ENCODE measurements at regions of chr9 and their contacts with region 1.

Region 1: GRCh38 chr9:98087420-98088354 is 31.2 kb downstream of the NANS start:
- DNase-seq: peak; percentile 45
- ATAC-seq: peak; percentile 76 to 82

Region 2: DNA sequence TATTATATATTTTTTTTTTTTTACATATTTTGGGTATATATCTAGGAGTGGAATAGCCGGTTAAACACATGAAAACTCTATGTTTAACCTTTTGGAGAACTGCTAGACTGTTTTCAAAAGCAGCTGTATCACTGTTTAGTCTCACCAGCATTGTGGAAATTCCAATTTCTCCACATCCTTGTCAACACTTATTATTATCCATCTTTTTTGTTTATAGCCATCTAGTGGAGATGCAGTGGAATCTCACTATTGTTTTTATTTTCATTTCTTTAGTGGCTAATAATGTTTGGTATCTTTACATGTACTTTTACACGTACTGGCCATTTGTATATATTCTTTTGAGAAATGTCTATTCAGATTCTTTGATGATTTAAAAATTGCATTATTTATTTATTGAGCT is 802.9 kb before region 1 on chr9:
- intact Hi-C with region 1: no loop called
- DNase-seq: no peak
- ATAC-seq: no peak

Region 3: DNA sequence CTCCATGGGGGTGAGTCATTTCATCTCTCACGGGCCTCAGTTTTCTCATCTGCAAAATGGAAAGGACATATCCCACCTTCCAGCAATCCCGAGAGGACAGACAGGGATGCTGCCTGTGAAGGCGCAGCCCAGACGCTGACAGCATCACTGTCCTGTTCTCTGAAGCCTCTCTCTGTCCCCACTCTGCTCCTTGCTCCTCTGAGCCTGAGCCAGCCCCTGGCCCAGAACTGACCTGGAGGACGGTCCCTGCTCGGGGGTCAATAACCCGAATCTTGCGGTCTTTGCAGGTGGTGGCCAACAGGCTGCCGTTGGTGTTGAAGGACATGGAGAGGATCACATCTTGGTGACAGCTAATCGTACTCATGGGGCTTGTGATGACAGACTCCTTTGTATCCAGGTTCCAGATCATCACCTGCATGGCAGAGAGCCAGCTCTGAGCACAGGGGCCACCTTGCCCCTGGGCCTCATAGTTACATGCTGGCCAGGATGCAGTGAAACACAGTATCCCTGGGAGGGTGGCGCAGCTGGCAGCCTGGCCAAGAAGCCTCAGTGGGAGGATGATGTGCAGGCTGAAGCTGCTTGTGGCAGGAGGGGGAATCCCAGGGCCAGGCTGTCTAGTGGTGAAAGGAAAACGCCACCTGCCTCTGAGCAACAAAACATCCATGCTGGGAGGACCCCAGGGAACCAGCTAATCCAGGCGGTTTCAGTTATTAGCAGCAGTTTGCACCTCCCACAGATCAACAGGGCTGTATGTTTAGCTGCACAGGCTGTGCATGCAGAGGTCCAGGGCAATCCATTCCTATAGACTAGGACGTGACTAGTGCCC is 45.3 kb after region 1 on chr9:
- intact Hi-C with region 1: loop called in 1 of 2 experiments (anchors 10 kb)
- DNase-seq: no peak
- ATAC-seq: no peak